ENCODE measurements at regions of chr17 and their contacts with region 1.

Region 1: GRCh38 chr17:5249615-5250014 is 15.0 kb upstream of the SCIMP start:
- DNase-seq: peak in 1 of 2 donors; percentile 72
- H3K4me3 ChIP-seq: no peak overlapping the region
- CTCF ChIP-seq: peak in 1 of 3 donors; percentile 58
- POLR2A ChIP-seq: no peak

Region 2: DNA sequence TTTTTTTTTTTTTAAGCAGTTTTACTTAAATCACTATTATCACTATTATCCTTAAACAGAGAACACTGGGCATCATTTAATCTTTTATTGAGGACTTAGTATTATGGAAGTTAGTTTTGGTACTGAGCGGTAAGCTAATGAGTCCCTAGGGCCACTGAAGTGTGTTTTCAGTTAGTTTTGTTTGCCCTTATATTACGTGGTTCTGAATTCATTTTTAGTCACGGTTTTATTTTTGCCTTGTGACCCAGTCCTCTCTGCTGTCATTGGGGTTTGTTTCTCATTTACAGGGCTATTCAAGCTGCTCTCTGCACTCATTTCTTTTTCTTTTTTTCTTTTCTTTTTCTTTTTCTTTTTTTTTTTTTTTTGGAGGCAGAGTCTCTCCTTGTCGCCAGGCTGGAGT is 49.8 kb after region 1 on chr17:
- intact Hi-C with region 1: no loop called
- DNase-seq: no peak
- H3K4me3 ChIP-seq: no peak overlapping the region
- CTCF ChIP-seq: no peak
- POLR2A ChIP-seq: no peak

Region 3: GRCh38 chr17:5413682-5414081 is 164.1 kb after region 1 on chr17:
- intact Hi-C with region 1: no loop called
- DNase-seq: no peak
- H3K4me3 ChIP-seq: no peak overlapping the region
- CTCF ChIP-seq: no peak
- POLR2A ChIP-seq: no peak

Region 4: GRCh38 chr17:5486204-5487124 is 236.8 kb after region 1 on chr17 and contains the start of gene MIS12:
- intact Hi-C with region 1: no loop called
- DNase-seq: peak; percentile 99 to 100
- H3K4me3 ChIP-seq: peak within 1 kb of the TSS; percentile 92
- CTCF ChIP-seq: no peak
- POLR2A ChIP-seq: no peak
- total RNA-seq, gene MIS12: 6.7 to 10.3 (median 9.5) TPM

Region 5: DNA sequence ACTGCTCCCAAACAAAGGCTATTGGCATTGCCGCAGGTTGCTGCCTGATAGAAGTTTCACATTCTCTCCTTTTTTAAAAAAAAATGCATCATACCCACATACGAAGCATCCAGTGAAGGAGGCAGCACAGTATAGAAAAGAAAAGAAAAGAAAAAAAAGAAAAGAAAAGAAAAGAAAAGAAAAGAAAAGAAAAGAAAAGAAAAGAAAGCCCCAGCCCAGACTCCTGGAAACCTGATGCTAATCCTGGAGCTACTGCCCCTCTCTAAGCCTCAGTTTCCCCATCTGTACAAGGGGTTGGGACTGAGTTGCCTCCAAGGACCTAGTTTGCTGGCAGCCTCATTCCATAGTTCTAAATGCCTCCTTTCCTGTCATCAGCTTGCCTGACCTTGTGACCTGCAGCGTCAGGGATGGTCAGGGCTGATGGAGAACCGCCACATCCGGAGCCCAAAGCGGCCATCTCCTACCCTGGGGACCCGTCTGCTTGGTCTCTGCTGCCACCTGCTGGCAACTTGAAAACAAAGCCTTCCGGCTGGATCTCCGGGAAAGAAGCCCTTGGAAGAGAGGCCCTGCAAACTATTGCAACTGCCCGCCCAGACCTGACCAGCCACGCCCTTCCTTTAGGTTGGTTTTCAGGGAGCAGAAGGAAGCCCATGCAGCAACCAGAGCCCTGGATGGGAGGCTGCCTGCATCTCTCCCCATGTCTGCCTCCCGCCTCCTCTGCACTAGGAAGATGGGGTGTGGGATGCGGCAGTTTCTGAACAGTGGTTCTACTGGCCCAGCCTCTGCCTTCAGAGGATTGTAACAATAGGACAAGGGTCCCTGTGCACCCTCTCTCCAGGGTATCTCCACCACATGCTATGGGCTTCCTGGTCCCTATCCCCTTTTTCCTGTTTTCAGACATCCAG is 1172.3 kb after region 1 on chr17:
- intact Hi-C with region 1: loop called (anchors 10 kb)
- DNase-seq: peak; percentile 66 to 95
- H3K4me3 ChIP-seq: no peak overlapping the region
- CTCF ChIP-seq: no peak
- POLR2A ChIP-seq: no peak